Common myeloid progenitor, CD34-positive (primary cell): ENCODE measurements at regions of chr10 and their contacts with region 1.

Region 1: DNA sequence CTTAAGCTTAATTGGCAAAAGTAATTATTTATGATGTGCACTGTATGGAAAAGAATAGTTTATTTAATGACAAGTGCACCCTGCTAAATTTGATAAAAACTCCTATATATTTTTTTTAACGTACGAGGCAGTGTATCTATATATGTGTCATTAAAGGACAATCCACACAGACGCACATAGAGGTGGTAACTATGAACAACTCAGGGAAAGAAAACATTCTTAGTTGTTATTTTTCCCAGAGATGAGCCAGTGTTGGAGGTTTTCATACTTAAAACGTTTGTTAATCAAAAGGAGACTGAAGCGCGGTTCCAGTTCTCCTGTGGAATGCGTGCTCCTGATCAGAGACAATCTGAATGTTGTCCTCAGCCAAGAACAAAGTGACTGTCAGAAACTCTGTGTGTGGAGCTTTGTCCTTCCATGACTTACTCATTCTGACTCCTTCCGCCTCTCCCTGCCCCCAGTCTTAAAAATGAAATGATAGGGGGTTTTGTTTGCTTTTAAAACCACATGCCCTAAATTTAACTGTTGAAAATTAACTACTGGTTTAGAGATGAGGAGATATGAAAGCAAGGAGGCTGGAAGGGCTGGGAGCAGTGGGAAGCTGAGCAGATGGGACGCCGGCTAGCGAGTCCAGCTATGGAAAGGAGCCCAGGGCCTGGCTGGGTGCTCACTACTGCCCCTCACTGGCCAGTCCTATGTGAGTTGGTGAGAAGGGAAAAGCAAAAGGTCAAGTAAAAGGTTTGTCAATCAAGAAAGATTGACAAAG is 99.6 kb downstream of the SVIL start:
- DNase-seq: peak in 2 of 3 donors; percentile 22 to 33
- H3K4me3 ChIP-seq: peak overlapping the region in 1 of 7 experiments; percentile 25
- H3K27ac ChIP-seq: no peak overlapping the region
- H3K4me1 ChIP-seq: peaks cover 0 to 12% (median 7%) of the 10 kb centered on the region in 4 experiments
- H3K27me3 ChIP-seq: no peaks in the 10 kb centered on the region

Region 2: DNA sequence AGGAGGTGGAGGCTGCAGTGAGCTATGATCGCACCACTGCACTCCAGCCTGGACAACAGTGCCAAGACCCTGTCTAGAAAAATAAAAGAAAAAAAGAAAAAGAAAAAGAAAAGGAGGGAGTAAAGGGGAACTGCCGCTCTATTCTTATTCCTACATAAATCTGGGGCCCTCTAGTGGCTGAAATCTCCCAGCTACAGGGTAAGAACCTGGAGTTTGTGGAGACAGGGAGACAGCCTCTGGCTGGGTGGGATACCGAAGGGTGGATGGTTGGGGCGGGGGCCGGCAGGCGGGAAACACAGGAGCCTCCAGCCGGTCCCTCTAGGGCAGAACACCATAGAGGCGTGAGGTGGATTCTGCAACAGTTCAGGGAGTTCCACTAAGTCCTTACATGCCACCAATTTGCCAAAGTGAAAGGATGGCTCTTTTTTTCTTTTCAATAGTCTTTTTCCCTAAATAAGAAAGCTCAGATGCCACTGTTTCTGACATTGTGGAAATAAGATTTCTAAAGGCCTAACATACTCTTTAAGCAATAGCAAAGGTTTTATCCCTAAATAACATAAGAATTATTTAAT is 17.8 kb before region 1 on chr10:
- CTCF ChIA-PET with region 1: interaction called, 22 read pairs
- POLR2A ChIA-PET with region 1: no interaction called
- DNase-seq: peak; percentile 29 to 51 (median 40)
- H3K4me3 ChIP-seq: no peak overlapping the region
- H3K27ac ChIP-seq: no peak overlapping the region
- H3K4me1 ChIP-seq: no peaks in the 10 kb centered on the region
- H3K27me3 ChIP-seq: no peaks in the 10 kb centered on the region

Region 3: DNA sequence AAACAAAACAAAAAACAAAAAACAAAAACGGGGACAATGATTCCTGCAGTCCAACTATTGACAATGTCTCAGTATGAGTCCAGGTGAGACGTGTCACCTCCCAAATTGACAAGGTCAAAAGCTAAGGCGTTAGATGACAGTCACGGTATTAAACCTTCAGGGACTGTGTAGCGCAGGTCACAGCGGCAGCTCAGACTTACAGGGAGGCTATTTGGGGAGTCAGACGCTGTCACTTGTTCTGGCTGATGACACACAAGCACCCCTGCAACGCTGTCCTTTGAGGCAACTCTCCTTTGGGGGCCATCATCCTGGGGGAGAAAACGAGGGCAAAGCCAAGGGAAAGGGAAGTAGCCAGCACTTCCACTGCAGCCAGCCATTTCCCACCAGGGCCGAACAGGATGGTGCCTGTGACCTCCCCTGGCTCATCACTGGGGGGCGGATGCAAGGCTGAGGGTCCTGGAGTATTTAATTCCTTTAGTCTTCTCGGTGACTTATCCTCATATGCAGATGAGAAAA is 44.3 kb after region 1 on chr10:
- CTCF ChIA-PET with region 1: no interaction called
- POLR2A ChIA-PET with region 1: no interaction called
- DNase-seq: no peak
- H3K4me3 ChIP-seq: no peak overlapping the region
- H3K27ac ChIP-seq: no peak overlapping the region
- H3K4me1 ChIP-seq: peaks cover 0 to 9% (median 0%) of the 10 kb centered on the region in 4 experiments
- H3K27me3 ChIP-seq: no peaks in the 10 kb centered on the region

Region 4: DNA sequence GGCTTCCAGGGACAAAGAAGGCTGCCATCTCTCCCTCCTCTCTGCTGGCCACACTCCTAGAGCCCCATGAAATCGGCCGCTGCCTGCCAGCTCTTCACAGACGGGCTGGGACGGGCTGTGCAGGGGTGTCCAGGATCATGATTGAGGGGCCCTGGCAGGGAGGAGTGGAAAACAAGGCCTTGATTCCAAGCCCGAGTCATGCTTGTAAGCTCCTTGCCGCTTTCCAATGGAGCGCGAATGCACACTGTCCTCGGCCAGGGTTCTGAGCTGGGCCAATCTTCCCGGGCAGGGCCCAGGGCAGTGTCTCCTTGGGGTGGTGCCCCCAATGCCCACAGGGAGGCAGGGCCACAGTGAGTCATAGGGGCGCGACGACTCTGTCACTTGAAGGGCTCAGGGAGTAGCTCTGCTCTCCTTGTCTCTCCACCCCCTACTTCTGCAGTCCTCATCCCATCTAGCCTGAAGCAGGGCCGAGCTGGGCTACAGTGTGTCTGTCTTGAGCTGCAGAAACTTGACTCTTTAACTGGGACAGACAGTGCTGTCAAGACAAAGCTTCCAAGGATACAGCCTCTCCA is 285.8 kb after region 1 on chr10:
- CTCF ChIA-PET with region 1: no interaction called
- POLR2A ChIA-PET with region 1: no interaction called
- DNase-seq: no peak
- H3K4me3 ChIP-seq: no peak overlapping the region
- H3K27ac ChIP-seq: no peak overlapping the region
- H3K4me1 ChIP-seq: peaks cover 0 to 11% (median 2%) of the 10 kb centered on the region in 4 experiments
- H3K27me3 ChIP-seq: no peaks in the 10 kb centered on the region